MCF 10A (cell line): ENCODE measurements at regions of chr6 and their contacts with region 1.

Region 1: DNA sequence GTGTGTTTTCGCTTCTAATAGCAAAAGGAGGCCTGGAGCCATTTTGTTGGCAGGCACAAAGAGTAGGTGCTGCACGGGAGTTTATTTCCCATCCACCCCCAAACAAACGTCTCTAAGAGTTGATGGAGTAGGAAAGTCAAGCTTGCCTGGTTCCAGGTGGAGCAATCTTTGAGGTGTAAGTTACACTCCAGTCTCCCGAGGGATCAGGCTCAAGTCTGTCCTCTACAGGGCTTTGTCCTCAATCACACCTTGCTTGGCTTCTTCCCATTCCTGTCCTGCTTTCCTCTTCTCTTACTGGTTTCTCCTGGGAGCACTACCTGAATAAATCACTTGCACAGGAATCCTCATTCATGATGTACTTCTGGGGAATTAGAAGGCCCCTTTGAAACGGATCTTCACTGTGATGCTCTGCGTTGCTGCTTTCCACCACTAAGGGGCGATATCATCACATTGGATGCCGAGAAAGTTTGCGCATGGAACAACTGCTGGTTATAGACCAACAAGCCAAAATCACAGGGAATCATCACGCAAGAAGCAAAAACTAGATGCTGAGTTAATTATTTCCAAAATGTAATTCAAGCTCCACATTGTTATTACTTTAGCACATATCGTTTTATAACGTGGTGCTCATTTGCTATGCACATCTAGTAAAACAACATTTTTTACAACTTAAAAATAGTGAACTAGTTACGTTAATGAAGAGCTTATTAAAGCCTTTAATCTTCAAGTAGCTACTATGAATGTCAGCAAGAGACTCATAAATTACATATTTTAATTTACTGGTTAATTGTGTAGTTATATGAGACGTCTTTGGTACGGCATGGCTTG is 156.8 kb downstream of the DNAH8 start:
- DNase-seq: peak; percentile 66
- H3K4me3 Mint-ChIP-seq: no peak overlapping the region
- H3K27ac Mint-ChIP-seq: no peak overlapping the region
- H3K4me1 Mint-ChIP-seq: peaks cover 6% of the 10 kb centered on the region
- H3K27me3 Mint-ChIP-seq: no peaks in the 10 kb centered on the region
- CTCF ChIP-seq: peak; percentile 77

Region 2: GRCh38 chr6:38882157-38882556 is 10.2 kb after region 1 on chr6:
- CTCF ChIA-PET with region 1: interaction called, 25 read pairs
- POLR2A ChIA-PET with region 1: interaction called, 3 read pairs
- intact Hi-C with region 1: no loop called
- DNase-seq: no peak
- H3K4me3 Mint-ChIP-seq: no peak overlapping the region
- H3K27ac Mint-ChIP-seq: no peak overlapping the region
- H3K4me1 Mint-ChIP-seq: no peaks in the 10 kb centered on the region
- H3K27me3 Mint-ChIP-seq: no peaks in the 10 kb centered on the region
- CTCF ChIP-seq: no peak

Region 3: DNA sequence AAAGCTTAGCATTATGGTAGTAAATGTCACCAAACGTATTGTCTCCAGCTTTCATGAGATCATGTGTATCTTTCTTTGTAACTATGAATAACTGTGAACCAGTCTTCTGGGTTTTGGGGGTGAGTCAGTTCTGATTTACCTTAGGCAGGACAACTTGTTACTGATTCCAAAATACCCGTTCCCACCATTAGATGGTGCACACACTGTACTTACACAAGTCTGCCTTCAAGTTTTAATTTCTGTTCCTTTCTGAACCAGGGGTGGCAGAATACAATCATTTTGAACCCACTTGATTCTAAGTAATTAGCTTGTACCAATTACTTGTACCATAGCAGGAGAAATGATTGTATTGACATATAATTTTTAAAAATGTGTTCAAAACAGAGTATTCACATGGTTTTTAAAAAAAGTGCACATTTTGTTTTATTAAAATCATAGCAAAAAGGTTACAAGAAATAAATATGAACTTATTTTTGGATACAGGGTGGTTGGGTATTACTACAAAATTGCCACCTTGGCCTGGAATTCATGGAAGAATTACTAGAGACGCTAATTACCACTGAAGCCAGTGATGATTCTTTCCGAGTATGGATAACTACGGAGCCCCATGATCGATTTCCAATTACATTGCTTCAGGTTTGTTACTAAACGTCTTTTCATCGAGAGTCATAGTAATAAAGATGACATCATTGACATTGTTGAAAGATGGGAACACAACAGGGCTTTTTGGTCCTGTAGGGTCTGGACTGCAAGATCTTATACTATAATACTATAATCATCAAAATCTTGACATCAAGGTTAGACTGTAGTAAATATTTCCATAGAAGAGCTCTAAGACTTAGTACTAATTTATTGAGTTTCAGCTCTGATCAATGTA is 101.5 kb after region 1 on chr6:
- CTCF ChIA-PET with region 1: interaction called, 20 read pairs
- POLR2A ChIA-PET with region 1: no interaction called
- intact Hi-C with region 1: no loop called
- DNase-seq: peak; percentile 67
- H3K4me3 Mint-ChIP-seq: no peak overlapping the region
- H3K27ac Mint-ChIP-seq: no peak overlapping the region
- H3K4me1 Mint-ChIP-seq: peaks cover 5% of the 10 kb centered on the region
- H3K27me3 Mint-ChIP-seq: peaks cover 72% of the 10 kb centered on the region
- CTCF ChIP-seq: peak; percentile 76

Region 4: GRCh38 chr6:39143233-39143930 is 271.4 kb after region 1 on chr6:
- CTCF ChIA-PET with region 1: no interaction called
- POLR2A ChIA-PET with region 1: no interaction called
- intact Hi-C with region 1: no loop called
- DNase-seq: no peak
- H3K4me3 Mint-ChIP-seq: no peak overlapping the region
- H3K27ac Mint-ChIP-seq: no peak overlapping the region
- H3K4me1 Mint-ChIP-seq: no peaks in the 10 kb centered on the region
- H3K27me3 Mint-ChIP-seq: peaks cover 35% of the 10 kb centered on the region
- CTCF ChIP-seq: no peak

Region 5: DNA sequence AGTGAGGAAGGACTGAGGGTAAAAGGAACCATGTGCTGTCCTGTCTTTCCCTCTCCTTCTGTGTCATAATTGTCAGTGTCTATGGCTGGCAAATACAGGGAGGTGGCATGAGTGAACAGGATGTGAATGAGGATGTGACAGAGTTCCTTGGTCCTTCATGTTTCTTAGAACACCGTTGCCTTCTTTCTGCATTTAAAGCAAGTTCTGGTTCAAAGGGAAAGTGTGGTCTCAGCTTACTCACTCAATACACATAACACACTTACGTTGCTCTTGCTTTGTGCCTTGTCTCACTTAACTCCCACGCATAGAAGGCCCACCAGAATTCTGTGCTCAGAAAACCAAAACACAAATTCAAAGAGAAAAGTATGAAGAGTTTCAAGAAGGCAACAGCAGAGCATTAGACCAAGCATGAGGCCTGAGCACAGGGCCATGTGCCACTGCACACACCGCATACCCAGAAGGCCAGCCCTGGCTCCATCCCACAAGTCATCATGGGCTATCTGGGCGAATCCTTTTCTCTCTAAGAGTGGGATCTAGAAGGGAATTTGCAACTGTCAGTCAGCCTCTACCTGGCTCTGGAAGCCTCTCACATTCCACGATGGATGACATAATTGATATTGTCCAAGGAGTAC is 281.9 kb after region 1 on chr6:
- CTCF ChIA-PET with region 1: interaction called, 12 read pairs
- POLR2A ChIA-PET with region 1: no interaction called
- intact Hi-C with region 1: no loop called
- DNase-seq: no peak
- H3K4me3 Mint-ChIP-seq: no peak overlapping the region
- H3K27ac Mint-ChIP-seq: no peak overlapping the region
- H3K4me1 Mint-ChIP-seq: no peaks in the 10 kb centered on the region
- H3K27me3 Mint-ChIP-seq: peaks cover 43% of the 10 kb centered on the region
- CTCF ChIP-seq: no peak